A549 (cell line): ENCODE measurements at regions of chr9 and their contacts with region 1.

Region 1: GRCh38 chr9:94681508-94681907 is 42.2 kb upstream of the FBP1 start:
- DNase-seq: peak; percentile 86
- ATAC-seq: peak; percentile 98 to 99
- H3K4me3 ChIP-seq: no peak overlapping the region
- H3K27ac ChIP-seq: peak overlapping the region; percentile 71 to 82
- H3K4me1 ChIP-seq: peaks cover 16% of the 10 kb centered on the region
- CTCF ChIP-seq: peak; percentile 91
- EP300 ChIP-seq: no peak
- POLR2A ChIP-seq: no peak
- RAD21 ChIP-seq: peak; percentile 94 to 97

Region 2: GRCh38 chr9:93965830-93966577 is 715.5 kb before region 1 on chr9:
- CTCF ChIA-PET with region 1: no interaction called
- POLR2A ChIA-PET with region 1: no interaction called
- DNase-seq: no peak
- ATAC-seq: peak in 1 of 2 experiments; percentile 61; a peak in 3 of 6 replicates
- H3K4me3 ChIP-seq: no peak overlapping the region
- H3K27ac ChIP-seq: no peak overlapping the region
- H3K4me1 ChIP-seq: peaks cover 8% of the 10 kb centered on the region; the same call in 2 of the 3 replicates
- CTCF ChIP-seq: no peak
- EP300 ChIP-seq: no peak
- POLR2A ChIP-seq: no peak
- RAD21 ChIP-seq: peak in 1 of 2 experiments; percentile 30; a peak in 2 of 5 replicates

Region 3: GRCh38 chr9:94232429-94232828 is 449.1 kb before region 1 on chr9:
- CTCF ChIA-PET with region 1: no interaction called
- POLR2A ChIA-PET with region 1: no interaction called
- DNase-seq: no peak
- ATAC-seq: no peak
- H3K4me3 ChIP-seq: no peak overlapping the region
- H3K27ac ChIP-seq: no peak overlapping the region
- H3K4me1 ChIP-seq: no peaks in the 10 kb centered on the region
- CTCF ChIP-seq: no peak
- EP300 ChIP-seq: no peak
- POLR2A ChIP-seq: no peak
- RAD21 ChIP-seq: no peak

Region 4: GRCh38 chr9:94554439-94555391 is 126.8 kb before region 1 on chr9 and contains the start of gene PCAT7:
- CTCF ChIA-PET with region 1: interaction called, 10 read pairs
- POLR2A ChIA-PET with region 1: no interaction called
- DNase-seq: peak; percentile 64 to 88
- ATAC-seq: peak; percentile 99
- H3K4me3 ChIP-seq: peak within 1 kb of the TSS; percentile 63
- H3K27ac ChIP-seq: peak within 1 kb of the TSS; percentile 80 to 87
- H3K4me1 ChIP-seq: peaks cover 8% of the 10 kb centered on the region; the same call in 1 of the 3 replicates
- CTCF ChIP-seq: peak; percentile 86
- EP300 ChIP-seq: no peak
- POLR2A ChIP-seq: peak; percentile 71
- RAD21 ChIP-seq: peak; percentile 78 to 88
- polyA plus RNA-seq, gene PCAT7: 2.7 and 2.8 TPM in 2 replicates

Region 5: DNA sequence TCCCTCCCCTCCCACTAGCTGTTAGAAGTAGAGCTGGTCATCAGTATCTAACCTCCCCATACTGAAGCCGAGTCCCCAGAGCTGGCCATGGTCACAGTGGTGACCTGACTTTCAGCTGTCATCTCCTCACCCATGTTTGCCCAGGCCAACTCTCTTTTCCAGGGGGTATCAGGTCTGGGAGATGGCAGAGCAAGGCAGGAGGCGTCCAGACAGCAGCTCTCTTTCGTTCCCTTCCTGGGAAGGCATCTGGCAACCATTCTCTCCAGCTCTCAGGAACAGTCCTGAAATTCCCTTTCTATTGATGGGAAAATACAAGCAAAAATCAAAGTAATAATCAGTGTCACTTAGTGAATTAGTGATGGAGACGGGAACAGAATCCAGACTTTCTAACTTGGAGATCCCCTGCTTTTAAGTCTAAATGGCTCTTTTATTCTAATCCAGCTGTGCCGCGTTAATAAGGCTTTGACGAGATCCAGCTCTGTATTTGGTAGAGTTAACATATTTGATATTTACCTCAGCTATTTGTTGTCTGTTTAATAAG is 23.7 kb after region 1 on chr9:
- CTCF ChIA-PET with region 1: interaction called, 26 read pairs
- POLR2A ChIA-PET with region 1: no interaction called
- DNase-seq: no peak
- ATAC-seq: no peak
- H3K4me3 ChIP-seq: no peak overlapping the region
- H3K27ac ChIP-seq: no peak overlapping the region
- H3K4me1 ChIP-seq: peaks cover 8% of the 10 kb centered on the region
- CTCF ChIP-seq: no peak
- EP300 ChIP-seq: no peak
- POLR2A ChIP-seq: no peak
- RAD21 ChIP-seq: no peak

Region 6: DNA sequence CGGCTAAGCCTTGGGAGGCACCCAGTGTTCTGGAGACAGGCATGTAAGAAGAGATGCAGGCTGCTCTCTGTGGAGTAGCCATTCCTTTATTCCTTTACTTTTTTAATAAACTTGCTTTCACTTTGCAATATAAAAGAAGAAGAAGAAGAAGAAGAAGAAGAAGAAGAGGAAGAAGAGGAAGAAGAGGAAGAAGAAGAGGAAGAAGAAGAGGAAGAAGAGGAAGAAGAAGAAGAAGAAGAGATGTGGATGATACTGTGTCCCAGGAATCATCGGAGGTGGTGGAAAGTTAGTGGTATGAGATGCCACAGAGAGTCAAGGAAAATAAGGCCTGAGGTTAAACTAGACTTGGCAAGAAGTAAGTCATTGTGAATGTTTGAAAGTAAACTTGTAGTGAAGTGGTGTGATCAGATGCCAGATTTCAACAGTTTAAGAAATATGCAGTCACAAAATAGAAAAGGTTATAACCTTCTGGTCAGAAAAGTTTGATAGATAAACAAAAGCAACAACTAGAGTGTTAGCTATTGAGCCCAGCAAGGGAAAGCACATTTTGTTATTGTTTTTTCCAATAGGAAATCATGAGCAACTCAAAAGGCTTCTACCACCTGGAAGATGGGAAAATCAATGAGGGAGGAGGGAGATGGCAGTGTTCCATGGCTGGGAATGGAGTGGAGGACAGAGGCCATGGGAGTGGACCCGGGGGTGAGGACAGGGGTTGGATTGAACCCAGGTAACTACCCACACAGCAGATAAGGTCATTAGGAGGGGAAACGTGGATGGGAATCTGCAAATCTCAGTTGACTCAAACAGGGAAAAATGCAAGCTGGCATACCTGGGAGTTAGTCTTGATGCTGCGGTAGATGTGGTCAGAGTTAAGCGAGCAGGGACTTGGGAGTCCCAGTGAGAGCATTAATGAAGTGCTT is 61.8 kb after region 1 on chr9:
- CTCF ChIA-PET with region 1: no interaction called
- POLR2A ChIA-PET with region 1: no interaction called
- DNase-seq: no peak
- ATAC-seq: no peak
- H3K4me3 ChIP-seq: no peak overlapping the region
- H3K27ac ChIP-seq: no peak overlapping the region
- H3K4me1 ChIP-seq: no peaks in the 10 kb centered on the region
- CTCF ChIP-seq: no peak
- EP300 ChIP-seq: no peak
- POLR2A ChIP-seq: no peak
- RAD21 ChIP-seq: no peak

Region 7: DNA sequence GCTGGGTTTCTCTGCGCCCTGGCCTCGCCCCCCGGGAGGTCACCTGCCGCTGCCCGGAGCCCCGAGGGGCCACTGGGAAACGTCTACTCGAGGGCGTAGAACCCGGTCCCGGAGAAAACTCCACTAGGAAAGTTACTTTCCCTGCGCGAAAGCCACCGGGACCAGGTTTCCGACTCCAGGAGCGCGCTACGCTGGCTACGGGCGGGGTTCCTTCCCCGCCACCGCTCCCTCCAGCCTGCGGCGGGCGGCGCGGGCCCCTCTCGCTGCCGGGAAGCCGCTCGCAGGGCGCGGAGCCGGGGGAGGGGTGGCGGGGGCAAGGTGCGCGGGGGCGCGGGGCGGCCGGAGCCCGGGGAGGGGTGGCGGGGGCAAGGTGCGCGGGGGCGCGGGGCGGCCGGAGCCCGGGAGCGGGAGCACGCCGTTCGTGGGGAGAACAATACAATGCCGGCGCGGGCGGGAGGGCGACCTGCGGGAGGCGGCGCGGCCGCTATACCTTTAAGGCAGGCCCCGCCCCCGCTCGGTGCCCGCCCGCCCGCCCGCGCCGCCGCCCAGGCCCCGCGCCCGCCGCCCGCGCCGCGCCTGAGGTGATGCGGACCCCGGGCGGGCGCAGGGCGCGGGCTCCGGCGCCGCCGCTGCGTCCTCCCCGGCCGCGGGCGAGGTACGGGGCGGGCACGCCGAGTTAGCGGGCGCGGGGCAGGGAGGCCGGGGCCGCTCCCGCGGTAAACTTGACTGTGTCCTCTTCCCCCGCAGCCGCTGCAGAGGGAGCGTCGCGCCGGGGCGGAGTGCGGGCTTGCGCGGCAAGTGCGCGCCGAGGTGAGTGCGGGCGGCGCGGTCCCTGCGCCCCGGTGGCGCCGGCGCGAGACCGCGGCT is 323.1 kb after region 1 on chr9:
- CTCF ChIA-PET with region 1: interaction called, 16 read pairs
- POLR2A ChIA-PET with region 1: no interaction called
- DNase-seq: peak in 1 of 2 experiments; percentile 74
- ATAC-seq: peak; percentile 57 to 76
- H3K4me3 ChIP-seq: peak overlapping the region; percentile 87
- H3K27ac ChIP-seq: peak overlapping the region; percentile 99 to 100
- H3K4me1 ChIP-seq: peaks cover 44% of the 10 kb centered on the region
- CTCF ChIP-seq: no peak
- EP300 ChIP-seq: no peak; a peak in 1 of 5 replicates
- POLR2A ChIP-seq: peak; percentile 38; the same call in 1 of the 2 replicates
- RAD21 ChIP-seq: no peak; a peak in 1 of 5 replicates

Region 8: GRCh38 chr9:95110991-95111421 is 429.5 kb after region 1 on chr9:
- CTCF ChIA-PET with region 1: interaction called, 22 read pairs
- POLR2A ChIA-PET with region 1: no interaction called
- DNase-seq: no peak
- ATAC-seq: no peak
- H3K4me3 ChIP-seq: no peak overlapping the region
- H3K27ac ChIP-seq: no peak overlapping the region
- H3K4me1 ChIP-seq: no peaks in the 10 kb centered on the region
- CTCF ChIP-seq: no peak
- EP300 ChIP-seq: no peak
- POLR2A ChIP-seq: no peak
- RAD21 ChIP-seq: no peak

Region 9: GRCh38 chr9:95138474-95138873 is 457.0 kb after region 1 on chr9:
- CTCF ChIA-PET with region 1: interaction called, 18 read pairs
- POLR2A ChIA-PET with region 1: no interaction called
- DNase-seq: no peak
- ATAC-seq: peak in 1 of 2 experiments; percentile 55; a peak in 3 of 6 replicates
- H3K4me3 ChIP-seq: no peak overlapping the region
- H3K27ac ChIP-seq: no peak overlapping the region
- H3K4me1 ChIP-seq: no peaks in the 10 kb centered on the region
- CTCF ChIP-seq: no peak
- EP300 ChIP-seq: no peak
- POLR2A ChIP-seq: no peak
- RAD21 ChIP-seq: no peak